ENCODE measurements at regions of chr2 and their contacts with region 1.

Region 1: GRCh38 chr2:152627351-152627957 is 89.8 kb downstream of the PRPF40A start:
- DNase-seq: peak; percentile 48
- H3K4me3 ChIP-seq: no peak overlapping the region; a peak in 1 of 4 replicates
- H3K27ac ChIP-seq: peak overlapping the region in 1 of 2 experiments; percentile 34; a peak in 1 of 4 replicates
- H3K4me1 ChIP-seq: peaks cover 5% of the 10 kb centered on the region in 2 experiments; a peak in 3 of 4 replicates
- H3K27me3 ChIP-seq: no peaks in the 10 kb centered on the region
- CTCF ChIP-seq: peak; percentile 84
- EP300 ChIP-seq: no peak
- RAD21 ChIP-seq: peak; percentile 85

Region 2: DNA sequence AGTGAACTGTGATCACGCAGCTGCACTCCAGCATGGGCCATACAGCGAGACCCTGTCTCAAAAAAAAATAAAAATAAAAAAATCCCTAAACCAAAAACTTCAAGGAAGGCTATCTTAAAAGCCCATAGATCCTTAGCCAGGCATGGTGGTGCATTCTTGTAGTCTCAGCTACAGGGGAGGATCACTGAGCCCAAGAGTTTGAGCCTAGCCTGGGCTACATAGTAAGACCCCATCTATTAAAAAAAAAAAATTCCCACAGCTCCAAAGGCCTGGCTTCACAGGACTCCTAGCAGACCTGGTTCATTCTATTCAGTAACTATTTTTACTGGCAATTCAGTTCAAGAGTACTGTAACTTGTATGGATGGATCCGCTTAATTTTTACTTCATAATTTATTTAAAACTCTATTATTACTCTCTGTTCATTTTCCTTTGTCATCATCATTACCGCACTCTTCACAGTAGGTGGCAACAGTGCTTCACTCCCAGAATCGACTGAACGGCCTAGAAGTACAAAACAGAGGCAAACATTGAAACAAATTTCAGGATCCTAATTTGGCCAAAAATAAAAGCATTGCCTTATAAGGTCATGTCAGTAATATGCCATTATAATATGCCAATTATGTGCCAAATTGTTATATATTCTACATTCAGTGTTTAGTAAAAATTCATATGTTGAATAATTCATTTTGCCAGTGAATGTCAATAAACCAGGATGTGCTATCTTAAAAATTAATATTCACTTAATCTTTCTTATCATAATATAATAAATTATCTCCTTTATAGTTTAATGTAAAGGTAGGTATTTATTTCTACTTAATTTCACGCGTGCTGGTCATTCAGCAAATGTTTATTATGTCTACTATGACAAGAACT is 437.6 kb before region 1 on chr2:
- CTCF ChIA-PET with region 1: interaction called, 15 read pairs
- POLR2A ChIA-PET with region 1: no interaction called
- DNase-seq: peak; percentile 50
- H3K4me3 ChIP-seq: no peak overlapping the region; a peak in 1 of 4 replicates
- H3K27ac ChIP-seq: no peak overlapping the region
- H3K4me1 ChIP-seq: no peaks in the 10 kb centered on the region
- H3K27me3 ChIP-seq: no peaks in the 10 kb centered on the region
- CTCF ChIP-seq: peak; percentile 94
- EP300 ChIP-seq: no peak
- RAD21 ChIP-seq: peak; percentile 97